Heart left ventricle (tissue), 16 donors: ENCODE measurements at regions of chr12 and their contacts with region 1.

Region 1: GRCh38 chr12:14239350-14239934 is 126.0 kb upstream of the ATF7IP start:
- DNase-seq: peak in 3 of 5 donors; percentile 22 to 67 (median 54)
- ATAC-seq: peak; percentile 47 to 99 (median 91)
- H3K4me3 ChIP-seq: peak overlapping the region in 8 of 12 donors; percentile 6 to 43 (median 12)
- H3K27ac ChIP-seq: peak overlapping the region in 7 of 12 donors; percentile 15 to 62 (median 42)
- H3K4me1 ChIP-seq: peaks cover 0 to 19% (median 0%) of the 10 kb centered on the region in 12 donors
- H3K27me3 ChIP-seq: no peaks in the 10 kb centered on the region
- CTCF ChIP-seq: peak in 3 of 12 donors; percentile 7 to 22 (median 13)
- POLR2A ChIP-seq: no peak

Region 2: DNA sequence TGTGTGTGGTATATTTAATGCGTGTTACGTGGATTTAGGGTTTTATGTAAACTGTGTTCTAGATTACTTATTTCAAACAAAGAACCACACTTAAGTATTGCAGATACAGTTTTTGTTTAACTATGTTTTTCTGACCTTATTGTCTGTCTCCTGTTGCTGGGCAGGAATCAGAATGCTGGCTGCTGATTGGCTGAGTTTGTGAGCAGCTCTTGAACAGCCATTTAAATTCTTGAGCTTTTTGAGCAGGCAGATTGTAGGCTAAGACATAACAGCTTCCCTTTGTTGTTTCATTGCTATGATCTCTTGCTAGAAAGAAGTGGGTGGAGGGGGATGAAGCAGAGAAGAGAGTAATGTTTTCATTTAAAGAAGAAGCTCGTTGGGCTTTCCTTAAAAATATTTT is 178.3 kb after region 1 on chr12:
- intact Hi-C with region 1: loop called in 1 of 10 experiments (anchors 2 kb)
- DNase-seq: peak; percentile 63 to 83 (median 73)
- ATAC-seq: peak; percentile 67 to 88 (median 86)
- H3K4me3 ChIP-seq: peak overlapping the region in 10 of 12 donors; percentile 8 to 39 (median 18)
- H3K27ac ChIP-seq: peak overlapping the region in 11 of 12 donors; percentile 10 to 69 (median 39)
- H3K4me1 ChIP-seq: peaks cover 6 to 86% (median 56%) of the 10 kb centered on the region in 12 donors
- H3K27me3 ChIP-seq: no peaks in the 10 kb centered on the region
- CTCF ChIP-seq: no peak
- POLR2A ChIP-seq: no peak

Region 3: DNA sequence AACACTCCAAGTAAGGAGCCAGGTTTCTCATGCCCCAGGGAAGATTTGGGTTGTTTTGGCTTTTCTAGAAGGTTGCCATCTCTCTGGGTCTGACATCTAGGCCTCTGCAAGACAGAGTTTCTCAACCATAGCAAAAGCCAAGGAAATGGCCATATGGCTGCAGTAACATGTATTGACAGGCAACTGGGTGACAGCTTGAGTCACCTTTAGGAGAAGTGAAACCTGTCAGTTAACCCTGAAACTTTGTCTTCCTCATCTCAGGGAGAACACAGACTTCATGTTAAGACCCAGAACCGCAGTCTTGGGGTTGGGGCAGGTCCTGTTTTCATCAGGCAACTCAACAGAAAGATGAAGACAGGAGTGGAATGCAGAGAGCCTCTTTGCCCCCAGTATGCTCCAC is 374.3 kb after region 1 on chr12:
- intact Hi-C with region 1: loop called in 9 of 10 experiments (anchors 2 to 10 kb)
- DNase-seq: no peak
- ATAC-seq: no peak
- H3K4me3 ChIP-seq: no peak overlapping the region
- H3K27ac ChIP-seq: peak overlapping the region in 9 of 12 donors; percentile 13 to 78 (median 52)
- H3K4me1 ChIP-seq: peaks cover 0 to 29% (median 18%) of the 10 kb centered on the region in 12 donors
- H3K27me3 ChIP-seq: no peaks in the 10 kb centered on the region
- CTCF ChIP-seq: no peak
- POLR2A ChIP-seq: no peak

Region 4: GRCh38 chr12:14629832-14630710 is 390.6 kb after region 1 on chr12:
- intact Hi-C with region 1: loop called in 1 of 10 experiments (anchors 10 kb)
- DNase-seq: peak in 4 of 5 donors; percentile 55 to 67 (median 61)
- ATAC-seq: peak; percentile 87 to 99 (median 98)
- H3K4me3 ChIP-seq: no peak overlapping the region
- H3K27ac ChIP-seq: no peak overlapping the region
- H3K4me1 ChIP-seq: peaks cover 0 to 3% (median 0%) of the 10 kb centered on the region in 12 donors
- H3K27me3 ChIP-seq: no peaks in the 10 kb centered on the region
- CTCF ChIP-seq: peak; percentile 90 to 97 (median 94)
- POLR2A ChIP-seq: no peak

Region 5: GRCh38 chr12:14710632-14711320 is 471.3 kb after region 1 on chr12:
- intact Hi-C with region 1: loop called in 2 of 10 experiments (anchors 5 kb)
- DNase-seq: no peak
- ATAC-seq: no peak
- H3K4me3 ChIP-seq: no peak overlapping the region
- H3K27ac ChIP-seq: peak overlapping the region in 1 of 12 donors; percentile 39
- H3K4me1 ChIP-seq: no peaks in the 10 kb centered on the region
- H3K27me3 ChIP-seq: no peaks in the 10 kb centered on the region
- CTCF ChIP-seq: no peak
- POLR2A ChIP-seq: no peak

Region 6: GRCh38 chr12:14995583-14996425 is 756.4 kb after region 1 on chr12:
- intact Hi-C with region 1: loop called in 1 of 10 experiments (anchors 5 kb)
- DNase-seq: no peak
- ATAC-seq: peak in 2 of 4 donors; percentile 47 to 55
- H3K4me3 ChIP-seq: no peak overlapping the region
- H3K27ac ChIP-seq: peak overlapping the region in 1 of 12 donors; percentile 6
- H3K4me1 ChIP-seq: peaks cover 0 to 22% (median 1%) of the 10 kb centered on the region in 12 donors
- H3K27me3 ChIP-seq: no peaks in the 10 kb centered on the region
- CTCF ChIP-seq: peak; percentile 62 to 88 (median 72)
- POLR2A ChIP-seq: no peak